HCT116 (cell line): ENCODE measurements at regions of chr1 and their contacts with region 1.

Region 1: DNA sequence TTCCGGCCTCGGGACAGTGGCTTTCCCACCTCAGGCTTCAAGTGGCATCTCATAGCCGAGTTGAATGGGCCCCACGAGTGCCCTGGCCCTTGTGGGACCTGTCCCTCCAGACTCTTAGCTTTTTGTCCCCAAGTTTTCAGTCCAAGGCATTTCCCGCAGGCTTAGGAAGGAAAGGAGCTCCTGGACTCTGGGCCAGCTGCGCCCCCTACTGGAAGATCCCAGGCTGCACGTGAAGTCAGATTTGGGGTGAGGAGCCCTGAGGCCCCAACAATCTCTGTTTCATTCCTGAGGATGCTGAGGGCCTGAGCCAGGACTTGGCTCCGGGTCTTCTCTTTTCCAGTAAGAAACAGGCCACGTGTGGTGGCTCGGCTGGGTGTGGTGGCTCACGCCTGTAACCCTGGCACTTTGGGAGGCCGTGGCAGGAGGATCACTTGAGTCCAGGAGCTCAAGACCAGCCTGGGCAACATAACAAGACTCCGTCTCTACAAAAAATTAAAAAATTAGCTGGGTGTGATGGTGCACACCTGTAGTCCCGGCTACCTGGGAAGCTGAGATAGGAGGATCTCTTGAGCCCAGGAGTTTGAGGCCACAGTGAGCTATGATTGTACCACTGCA is 67.4 kb downstream of the ARHGEF10L start:
- DNase-seq: peak; percentile 36
- ATAC-seq: peak; percentile 81
- H3K4me3 ChIP-seq: no peak overlapping the region
- H3K27ac ChIP-seq: no peak overlapping the region
- H3K4me1 ChIP-seq: no peaks in the 10 kb centered on the region; a peak in 1 of 4 replicates
- H3K27me3 ChIP-seq: no peaks in the 10 kb centered on the region
- CTCF ChIP-seq: peak; percentile 95 to 98 (median 95)
- POLR2A ChIP-seq: no peak
- RAD21 ChIP-seq: peak; percentile 99

Region 2: GRCh38 chr1:17419626-17420328 is 187.2 kb before region 1 on chr1:
- CTCF ChIA-PET with region 1: no interaction called
- POLR2A ChIA-PET with region 1: no interaction called
- RAD21 ChIA-PET with region 1: no interaction called
- intact Hi-C with region 1: loop called (anchors 5 kb)
- DNase-seq: no peak
- ATAC-seq: peak; percentile 90
- H3K4me3 ChIP-seq: no peak overlapping the region
- H3K27ac ChIP-seq: no peak overlapping the region
- H3K4me1 ChIP-seq: no peaks in the 10 kb centered on the region
- H3K27me3 ChIP-seq: no peaks in the 10 kb centered on the region
- CTCF ChIP-seq: peak; percentile 80 to 100 (median 100)
- POLR2A ChIP-seq: no peak
- RAD21 ChIP-seq: peak; percentile 90

Region 3: DNA sequence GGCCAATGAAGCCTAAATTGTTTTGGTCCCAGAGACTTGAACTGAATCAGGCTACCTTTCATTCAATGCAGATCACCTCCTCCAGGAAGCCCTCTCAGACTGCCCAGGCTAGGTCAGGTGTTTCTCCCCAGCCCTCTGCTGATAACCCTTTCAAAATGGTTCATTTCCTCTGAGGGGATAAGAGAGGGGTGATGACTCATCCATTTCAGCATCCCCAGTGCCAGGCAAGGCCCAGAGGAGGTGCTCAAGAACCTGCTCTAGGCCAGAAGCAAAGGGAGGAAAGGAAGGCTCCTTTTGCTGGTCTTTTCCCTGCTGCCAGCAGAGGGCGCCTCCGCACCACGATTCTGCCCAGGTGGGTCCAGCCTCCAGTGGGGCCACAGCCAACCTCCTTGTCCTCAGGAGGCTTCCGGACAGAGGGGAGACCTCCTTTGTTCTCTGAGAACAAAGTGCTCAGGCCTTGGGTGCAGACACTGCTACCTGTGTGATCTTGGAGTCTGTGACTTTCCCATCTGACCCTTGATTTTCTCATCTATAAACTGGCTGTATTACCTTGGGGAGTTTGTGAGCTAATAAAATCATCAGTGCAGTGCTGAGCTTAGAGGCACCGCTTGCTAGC is 112.7 kb before region 1 on chr1:
- CTCF ChIA-PET with region 1: interaction called, 36 read pairs
- POLR2A ChIA-PET with region 1: no interaction called
- RAD21 ChIA-PET with region 1: interaction called, 9 to 11 read pairs
- intact Hi-C with region 1: loop called (anchors 2 kb)
- DNase-seq: peak; percentile 86
- ATAC-seq: peak; percentile 94
- H3K4me3 ChIP-seq: no peak overlapping the region
- H3K27ac ChIP-seq: no peak overlapping the region
- H3K4me1 ChIP-seq: peaks cover 21 to 44% of the 10 kb centered on the region in 2 experiments; a peak in 3 of 4 replicates
- H3K27me3 ChIP-seq: no peaks in the 10 kb centered on the region
- CTCF ChIP-seq: peak; percentile 97 to 99 (median 98)
- POLR2A ChIP-seq: no peak
- RAD21 ChIP-seq: peak; percentile 98

Region 4: DNA sequence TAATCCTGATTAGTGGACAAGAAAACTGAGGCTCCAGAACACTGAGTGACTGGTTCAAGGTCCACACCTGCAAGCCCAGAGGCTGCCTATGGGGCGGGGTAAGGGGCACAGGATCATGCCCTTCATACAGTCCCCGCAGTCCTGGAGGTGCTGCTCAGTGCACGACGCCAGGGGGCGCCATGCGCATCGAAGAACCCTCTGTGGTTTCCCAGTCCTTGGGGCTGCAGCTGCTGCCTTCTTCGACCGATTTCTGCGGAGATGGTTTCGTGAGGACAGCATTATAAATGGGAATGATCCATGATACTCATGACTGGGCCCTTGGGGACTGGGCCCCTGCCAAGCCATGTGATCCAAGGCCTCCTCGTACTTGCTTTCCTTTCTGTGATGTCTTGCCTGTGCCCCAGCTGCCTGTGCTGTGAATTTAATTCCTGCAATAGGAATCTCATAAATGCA is 104.6 kb before region 1 on chr1:
- CTCF ChIA-PET with region 1: interaction called, 101 read pairs
- POLR2A ChIA-PET with region 1: no interaction called
- RAD21 ChIA-PET with region 1: interaction called, 22 to 28 read pairs
- intact Hi-C with region 1: loop called (anchors 1 kb)
- DNase-seq: peak; percentile 61
- ATAC-seq: peak; percentile 99
- H3K4me3 ChIP-seq: no peak overlapping the region
- H3K27ac ChIP-seq: no peak overlapping the region
- H3K4me1 ChIP-seq: peaks cover 5 to 16% of the 10 kb centered on the region in 2 experiments; a peak in 3 of 4 replicates
- H3K27me3 ChIP-seq: no peaks in the 10 kb centered on the region
- CTCF ChIP-seq: peak; percentile 91 to 95 (median 94)
- POLR2A ChIP-seq: no peak
- RAD21 ChIP-seq: peak; percentile 99

Region 5: GRCh38 chr1:17574516-17574915 is 32.4 kb before region 1 on chr1:
- CTCF ChIA-PET with region 1: interaction called, 38 read pairs
- POLR2A ChIA-PET with region 1: no interaction called
- RAD21 ChIA-PET with region 1: interaction called, 5 to 8 read pairs
- intact Hi-C with region 1: no loop called
- DNase-seq: no peak
- ATAC-seq: peak; percentile 42
- H3K4me3 ChIP-seq: no peak overlapping the region
- H3K27ac ChIP-seq: peak overlapping the region; percentile 56; the same call in 1 of the 2 replicates
- H3K4me1 ChIP-seq: peaks cover 61 to 83% of the 10 kb centered on the region in 2 experiments
- H3K27me3 ChIP-seq: no peaks in the 10 kb centered on the region
- CTCF ChIP-seq: peak; percentile 21 to 58 (median 45); a peak in 5 of 6 replicates
- POLR2A ChIP-seq: no peak
- RAD21 ChIP-seq: peak; percentile 50